ENCODE measurements at regions of chr3 and their contacts with region 1.

Region 1: DNA sequence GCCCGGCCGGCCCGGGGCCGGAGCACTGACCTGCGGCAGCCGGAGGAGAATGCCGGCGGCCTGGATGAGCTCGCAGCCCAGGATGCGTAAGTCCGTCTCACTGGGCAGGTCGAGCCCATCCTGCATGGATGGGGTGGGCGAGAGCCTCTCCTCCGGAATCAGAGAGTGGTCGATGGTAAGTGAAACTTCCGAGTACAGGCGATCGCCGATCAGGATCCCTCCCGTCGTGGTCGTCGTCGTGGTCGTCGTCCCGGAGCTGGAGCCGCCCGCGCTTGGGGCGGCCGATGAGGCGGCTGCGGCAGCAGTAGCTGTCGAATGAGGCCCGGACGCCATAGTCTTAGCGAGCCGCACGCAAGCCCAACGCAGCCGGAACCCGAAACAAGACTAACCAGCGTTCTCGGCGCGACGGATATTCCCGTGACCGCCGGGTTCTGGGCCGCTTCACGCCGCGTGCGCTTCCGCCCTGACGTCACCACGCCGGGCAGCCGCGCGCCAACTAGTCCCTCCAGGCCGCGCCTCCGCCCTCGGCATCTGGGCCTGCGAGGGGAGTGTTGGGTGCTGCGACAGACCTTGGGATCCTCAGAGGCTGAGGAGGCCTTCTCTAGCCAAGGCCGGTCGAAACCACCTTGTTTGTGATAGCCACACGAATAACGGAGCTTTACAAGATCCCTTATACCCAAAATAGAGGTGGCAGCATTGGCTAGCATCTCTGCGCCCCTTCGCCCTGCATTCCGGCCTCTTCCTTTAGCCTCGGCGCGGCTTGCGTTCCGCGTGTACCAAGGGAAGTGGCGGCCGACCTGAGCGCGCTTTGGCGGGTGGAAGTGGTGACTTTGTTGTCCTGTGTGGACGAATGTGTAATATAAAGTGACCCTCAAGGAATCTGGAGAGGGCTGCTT is at the start of gene CCNL1:
- DNase-seq: peak; percentile 91 to 98 (median 96)
- ATAC-seq: peak; percentile 73 to 75
- H3K4me3 Mint-ChIP-seq: peak within 1 kb of the TSS; percentile 85 to 99 (median 96)
- H3K27ac Mint-ChIP-seq: peak within 1 kb of the TSS; percentile 99 to 100 (median 99)
- H3K4me1 Mint-ChIP-seq: peaks cover 27 to 66% (median 57%) of the 10 kb centered on the region in 4 donors
- H3K27me3 Mint-ChIP-seq: no peaks in the 10 kb centered on the region
- polyA plus RNA-seq, gene CCNL1: 52.9 to 57.0 (median 54.9) TPM

Region 2: DNA sequence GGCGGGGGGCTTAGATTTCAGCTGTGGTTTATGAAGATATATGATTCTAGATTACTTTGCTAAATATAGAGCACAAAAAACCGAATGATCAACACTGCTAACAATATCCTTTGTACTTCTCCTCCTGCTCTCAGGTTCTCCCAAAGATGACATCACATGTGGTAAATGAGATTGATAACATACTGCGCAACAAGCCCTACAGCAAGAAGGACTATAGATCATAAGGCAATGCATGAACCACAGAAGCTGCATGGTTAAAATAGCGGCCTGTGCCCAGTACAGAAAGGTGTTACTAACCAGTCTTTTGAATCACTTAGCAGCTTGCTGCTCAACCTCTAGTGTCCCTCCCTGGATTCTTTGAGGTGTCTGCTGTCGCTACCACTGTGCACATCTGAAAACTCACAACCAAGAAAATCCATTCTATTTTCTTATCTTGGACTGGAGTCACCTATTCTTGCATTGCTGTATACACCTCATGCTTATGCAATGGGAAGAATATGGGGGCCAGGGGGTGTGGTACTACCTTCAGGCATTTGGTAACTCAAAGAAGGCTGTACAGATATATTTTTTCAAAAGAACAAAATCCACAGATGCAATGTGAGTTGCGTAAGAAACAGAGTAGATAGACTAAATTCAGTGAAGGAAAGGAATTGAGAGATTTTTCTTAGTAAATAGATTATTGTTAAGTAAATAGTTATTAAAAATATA is 623.3 kb before region 1 on chr3:
- POLR2A ChIA-PET with region 1: no interaction called
- DNase-seq: no peak
- ATAC-seq: no peak
- H3K4me3 Mint-ChIP-seq: no peak overlapping the region
- H3K27ac Mint-ChIP-seq: no peak overlapping the region
- H3K4me1 Mint-ChIP-seq: peaks cover 0 to 10% (median 0%) of the 10 kb centered on the region in 4 donors
- H3K27me3 Mint-ChIP-seq: no peaks in the 10 kb centered on the region

Region 3: GRCh38 chr3:156554842-156555687 is 604.9 kb before region 1 on chr3 and contains the start of gene SSR3:
- POLR2A ChIA-PET with region 1: interaction called, 24 read pairs
- DNase-seq: peak; percentile 92 to 99 (median 98)
- ATAC-seq: peak; percentile 98
- H3K4me3 Mint-ChIP-seq: peak within 1 kb of the TSS; percentile 92 to 99 (median 96)
- H3K27ac Mint-ChIP-seq: peak within 1 kb of the TSS; percentile 88 to 98 (median 96)
- H3K4me1 Mint-ChIP-seq: peaks cover 22 to 56% (median 42%) of the 10 kb centered on the region in 4 donors
- H3K27me3 Mint-ChIP-seq: peaks cover 0 to 1% (median 0%) of the 10 kb centered on the region in 5 donors
- polyA plus RNA-seq, gene SSR3: 81.7 to 93.9 (median 86.3) TPM

Region 4: GRCh38 chr3:156816800-156817645 is 343.0 kb before region 1 on chr3:
- POLR2A ChIA-PET with region 1: interaction called, 15 read pairs
- DNase-seq: peak; percentile 70 to 90 (median 80)
- ATAC-seq: peak; percentile 83 to 87
- H3K4me3 Mint-ChIP-seq: peak overlapping the region; percentile 90 to 97 (median 95)
- H3K27ac Mint-ChIP-seq: peak overlapping the region; percentile 89 to 98 (median 96)
- H3K4me1 Mint-ChIP-seq: peaks cover 15 to 35% (median 26%) of the 10 kb centered on the region in 4 donors
- H3K27me3 Mint-ChIP-seq: no peaks in the 10 kb centered on the region

Region 5: GRCh38 chr3:157130467-157131251 is 29.4 kb before region 1 on chr3:
- POLR2A ChIA-PET with region 1: interaction called, 30 read pairs
- DNase-seq: peak; percentile 54 to 92 (median 78)
- ATAC-seq: peak; percentile 64 to 74
- H3K4me3 Mint-ChIP-seq: peak overlapping the region; percentile 57 to 84 (median 72)
- H3K27ac Mint-ChIP-seq: peak overlapping the region; percentile 93 to 98 (median 98)
- H3K4me1 Mint-ChIP-seq: peaks cover 39 to 70% (median 66%) of the 10 kb centered on the region in 4 donors
- H3K27me3 Mint-ChIP-seq: no peaks in the 10 kb centered on the region

Region 6: DNA sequence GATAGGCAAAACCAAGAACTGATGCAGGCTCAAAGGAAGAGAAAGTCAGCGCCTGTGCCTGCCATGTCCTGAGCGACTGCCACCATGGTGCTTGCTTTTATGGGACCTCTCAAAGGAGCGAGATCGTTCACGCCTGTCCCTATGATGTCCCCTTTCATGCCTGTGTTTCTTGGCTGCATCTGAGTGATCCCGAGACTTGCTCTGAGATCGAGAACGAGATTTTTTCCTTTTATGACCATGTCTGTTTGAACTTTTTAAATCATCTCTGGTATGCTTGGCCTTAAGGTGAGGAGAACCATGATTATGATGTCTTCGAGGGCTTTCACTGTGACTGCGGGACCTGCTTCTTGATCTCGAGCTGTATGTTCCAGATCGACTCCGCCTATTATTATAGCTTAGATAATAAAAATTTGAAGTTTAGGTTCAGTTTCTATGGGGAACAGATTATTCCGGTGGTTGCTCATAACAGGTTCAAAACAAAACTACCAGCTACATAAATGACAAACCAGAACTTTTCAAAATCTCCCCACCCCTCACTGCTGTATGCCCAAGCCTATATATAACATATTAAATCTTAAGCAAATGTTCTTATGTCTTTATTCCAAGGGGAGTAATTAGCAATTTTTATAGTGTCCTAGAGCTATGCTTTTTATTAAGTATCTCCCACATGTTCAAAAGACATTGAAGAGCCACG is 11.7 kb before region 1 on chr3:
- POLR2A ChIA-PET with region 1: interaction called, 14 read pairs
- DNase-seq: no peak
- ATAC-seq: peak; percentile 9 to 27
- H3K4me3 Mint-ChIP-seq: no peak overlapping the region
- H3K27ac Mint-ChIP-seq: peak overlapping the region in 4 of 10 donors; percentile 5 to 61 (median 18)
- H3K4me1 Mint-ChIP-seq: peaks cover 13 to 31% (median 27%) of the 10 kb centered on the region in 4 donors
- H3K27me3 Mint-ChIP-seq: no peaks in the 10 kb centered on the region

Region 7: GRCh38 chr3:157201648-157202278 is 41.8 kb after region 1 on chr3:
- POLR2A ChIA-PET with region 1: interaction called, 12 read pairs
- DNase-seq: peak in 3 of 10 donors; percentile 17 to 31 (median 24)
- ATAC-seq: peak; percentile 51 to 65
- H3K4me3 Mint-ChIP-seq: no peak overlapping the region
- H3K27ac Mint-ChIP-seq: peak overlapping the region in 1 of 10 donors; percentile 46
- H3K4me1 Mint-ChIP-seq: peaks cover 0 to 3% (median 0%) of the 10 kb centered on the region in 4 donors
- H3K27me3 Mint-ChIP-seq: no peaks in the 10 kb centered on the region

Region 8: DNA sequence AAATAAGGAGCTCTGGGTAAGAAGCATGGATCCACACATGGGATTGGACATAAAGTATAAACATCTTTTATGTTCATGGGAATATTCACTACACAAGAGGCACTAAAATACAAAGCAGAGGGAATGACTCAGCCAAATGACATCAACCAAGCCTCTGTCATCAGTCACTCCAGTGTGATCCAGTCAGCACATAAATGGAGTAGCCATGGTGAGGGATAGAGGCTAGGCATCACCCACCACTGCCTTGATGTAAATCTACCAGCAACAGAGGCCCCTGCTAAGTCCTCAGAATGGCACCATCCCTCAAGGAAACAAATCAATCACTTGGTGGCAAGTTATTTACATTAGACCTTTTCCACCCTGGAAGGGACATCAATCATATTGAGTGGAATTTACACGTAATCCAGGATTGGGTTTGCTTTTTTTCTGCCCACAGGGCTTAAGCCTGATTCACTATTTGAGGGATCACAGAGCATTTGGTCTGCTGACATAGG is 316.0 kb after region 1 on chr3:
- POLR2A ChIA-PET with region 1: no interaction called
- DNase-seq: no peak
- ATAC-seq: no peak
- H3K4me3 Mint-ChIP-seq: no peak overlapping the region
- H3K27ac Mint-ChIP-seq: no peak overlapping the region
- H3K4me1 Mint-ChIP-seq: no peaks in the 10 kb centered on the region
- H3K27me3 Mint-ChIP-seq: peaks cover 0 to 2% (median 0%) of the 10 kb centered on the region in 5 donors

Measured in naive thymus-derived CD8-positive, alpha-beta T cell (primary cell).